PC-3 (cell line): ENCODE measurements at regions of chr1 and their contacts with region 1.

Region 1: GRCh38 chr1:8259498-8260290 is 58.2 kb upstream of the SLC45A1 start:
- DNase-seq: peak; percentile 86
- ATAC-seq: peak; percentile 42
- H3K4me3 ChIP-seq: peak overlapping the region; percentile 56
- H3K27ac ChIP-seq: peak overlapping the region; percentile 97
- H3K4me1 ChIP-seq: peaks cover 30% of the 10 kb centered on the region
- H3K27me3 ChIP-seq: no peaks in the 10 kb centered on the region
- CTCF ChIP-seq: no peak

Region 2: DNA sequence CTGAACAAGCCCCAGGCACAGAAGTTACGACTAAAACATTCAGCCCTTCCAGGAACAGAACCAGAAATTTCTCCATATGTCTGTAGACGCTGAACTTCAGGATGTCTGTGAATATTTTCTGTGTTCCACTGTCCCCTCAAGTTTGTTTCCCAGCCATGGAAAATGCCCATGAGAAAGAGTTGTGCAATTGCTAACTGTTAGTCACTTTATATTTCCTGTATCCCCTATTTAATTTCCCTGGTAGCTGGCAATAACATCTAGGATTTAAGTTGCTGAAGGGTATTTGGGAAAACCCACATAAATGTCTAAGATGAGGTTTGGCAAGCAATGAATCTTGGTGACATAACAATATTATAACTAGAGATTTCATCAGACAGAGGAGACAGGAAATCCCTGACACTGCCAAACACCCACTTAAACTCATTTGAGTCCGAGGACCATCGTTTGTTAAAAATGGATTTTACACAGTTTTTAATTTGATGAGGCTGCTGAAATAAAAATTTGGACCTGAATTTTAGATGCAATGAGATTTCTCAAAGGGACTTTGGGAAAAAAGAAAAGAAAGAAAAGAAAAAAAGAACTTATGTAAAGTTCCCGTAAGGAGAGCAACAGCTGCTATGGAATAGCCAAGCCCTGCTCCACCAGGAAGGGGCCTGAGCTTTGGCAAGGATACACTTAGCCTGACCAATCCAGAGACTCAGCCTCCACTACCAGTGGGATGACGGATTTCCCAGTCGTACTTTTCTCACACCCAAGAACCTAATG is 211.8 kb before region 1 on chr1:
- CTCF ChIA-PET with region 1: no interaction called
- POLR2A ChIA-PET with region 1: no interaction called
- intact Hi-C with region 1: loop called (anchors 5 kb)
- DNase-seq: peak; percentile 94
- ATAC-seq: peak; percentile 74
- H3K4me3 ChIP-seq: peak overlapping the region; percentile 12; the same call in 1 of the 2 replicates
- H3K27ac ChIP-seq: peak overlapping the region; percentile 96
- H3K4me1 ChIP-seq: peaks cover 42% of the 10 kb centered on the region
- H3K27me3 ChIP-seq: no peaks in the 10 kb centered on the region
- CTCF ChIP-seq: no peak

Region 3: DNA sequence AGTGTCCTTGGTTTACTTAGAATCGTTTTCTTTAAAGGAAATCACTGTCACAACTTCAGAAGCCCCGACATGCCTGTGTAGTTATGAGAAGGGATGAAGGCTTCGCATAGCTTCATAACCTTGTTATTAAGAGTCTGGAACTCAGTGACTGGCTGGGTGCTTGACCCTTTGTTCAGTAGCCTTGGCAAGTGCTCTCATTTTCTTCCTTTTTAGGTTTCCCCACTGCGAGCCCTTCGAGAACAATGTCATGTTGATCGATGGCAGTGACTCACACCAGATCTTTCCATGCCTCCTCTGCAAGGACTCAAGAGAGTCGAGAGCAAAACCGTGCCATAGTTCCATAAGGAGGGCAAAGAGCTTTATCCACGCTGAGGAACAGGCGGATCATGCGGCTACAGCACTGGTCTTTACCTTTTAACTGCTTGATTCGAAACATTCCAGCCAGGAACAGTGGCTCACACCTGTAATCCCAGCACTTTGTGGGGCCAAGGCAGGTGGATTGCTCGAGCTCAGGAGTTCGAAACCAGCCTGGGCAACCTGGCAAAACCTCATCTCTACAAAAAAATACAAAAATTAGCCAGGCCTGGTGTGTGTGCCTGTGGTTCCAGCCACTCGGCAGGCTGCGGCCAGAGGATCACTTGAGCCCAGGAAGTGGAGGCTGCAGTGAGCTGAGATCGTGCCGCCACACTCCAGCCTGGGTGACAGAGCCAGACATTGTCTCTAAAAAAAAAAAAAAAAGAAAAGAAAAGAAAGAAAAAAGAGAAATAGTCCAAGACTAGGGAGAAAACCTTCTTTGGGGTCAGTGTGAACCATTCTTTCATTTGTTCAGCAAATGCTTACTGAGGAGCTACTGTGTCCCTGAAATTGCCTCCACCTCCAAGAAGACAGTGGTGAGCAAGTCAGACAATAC is 138.2 kb before region 1 on chr1:
- CTCF ChIA-PET with region 1: no interaction called
- POLR2A ChIA-PET with region 1: no interaction called
- intact Hi-C with region 1: no loop called
- DNase-seq: peak; percentile 45
- ATAC-seq: no peak
- H3K4me3 ChIP-seq: no peak overlapping the region
- H3K27ac ChIP-seq: peak overlapping the region; percentile 54
- H3K4me1 ChIP-seq: peaks cover 14% of the 10 kb centered on the region
- H3K27me3 ChIP-seq: no peaks in the 10 kb centered on the region
- CTCF ChIP-seq: no peak

Region 4: GRCh38 chr1:8197493-8198282 is 62.0 kb before region 1 on chr1:
- CTCF ChIA-PET with region 1: no interaction called
- POLR2A ChIA-PET with region 1: interaction called, 4 read pairs
- intact Hi-C with region 1: loop called (anchors 1 kb)
- DNase-seq: peak; percentile 96
- ATAC-seq: peak; percentile 63
- H3K4me3 ChIP-seq: no peak overlapping the region
- H3K27ac ChIP-seq: peak overlapping the region; percentile 98
- H3K4me1 ChIP-seq: peaks cover 61% of the 10 kb centered on the region
- H3K27me3 ChIP-seq: no peaks in the 10 kb centered on the region
- CTCF ChIP-seq: no peak

Region 5: DNA sequence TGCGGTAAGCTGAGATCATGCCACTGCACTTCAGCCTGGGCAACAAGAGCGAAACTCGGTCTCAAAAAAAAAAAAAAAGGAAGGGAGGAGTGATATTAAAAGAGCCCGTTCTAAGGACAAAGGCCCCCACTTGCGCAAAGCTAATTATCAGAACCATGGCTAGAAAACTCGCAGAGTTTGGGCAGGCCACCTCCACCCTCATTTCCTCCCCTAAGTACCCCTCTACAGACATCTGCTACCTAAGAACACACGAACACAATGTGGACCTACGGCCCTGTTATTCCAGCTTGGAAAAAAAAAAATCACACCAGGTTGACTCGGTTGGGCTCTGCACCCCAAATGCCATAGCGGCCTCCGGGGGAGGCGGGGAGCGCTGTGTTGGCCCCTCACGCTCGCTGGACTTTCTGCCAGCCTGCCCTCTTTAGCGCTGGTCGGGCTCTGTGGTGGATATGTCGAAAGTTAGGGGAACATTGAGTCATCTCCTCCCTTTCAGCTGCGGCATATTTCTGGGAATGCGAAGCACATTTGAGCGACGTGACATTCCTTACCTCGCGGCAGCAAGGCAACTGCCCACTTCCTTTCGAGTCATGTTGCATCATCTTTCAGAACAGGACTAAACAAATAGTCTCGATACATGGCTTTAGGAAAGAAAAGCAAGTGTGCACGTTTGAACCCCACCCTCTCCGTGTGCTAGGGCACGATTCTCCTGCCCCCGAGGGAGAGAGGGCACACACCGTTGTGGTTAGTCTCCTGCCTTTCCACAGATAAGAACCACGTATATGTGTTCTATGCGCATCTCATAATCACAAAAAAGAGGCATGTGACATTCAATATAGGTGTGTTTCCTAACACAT is 47.9 kb before region 1 on chr1:
- CTCF ChIA-PET with region 1: no interaction called
- POLR2A ChIA-PET with region 1: interaction called, 3 read pairs
- intact Hi-C with region 1: loop called (anchors 2 kb)
- DNase-seq: peak; percentile 98
- ATAC-seq: peak; percentile 83
- H3K4me3 ChIP-seq: peak overlapping the region; percentile 22; the same call in 1 of the 2 replicates
- H3K27ac ChIP-seq: peak overlapping the region; percentile 98
- H3K4me1 ChIP-seq: peaks cover 33% of the 10 kb centered on the region
- H3K27me3 ChIP-seq: no peaks in the 10 kb centered on the region
- CTCF ChIP-seq: no peak

Region 6: DNA sequence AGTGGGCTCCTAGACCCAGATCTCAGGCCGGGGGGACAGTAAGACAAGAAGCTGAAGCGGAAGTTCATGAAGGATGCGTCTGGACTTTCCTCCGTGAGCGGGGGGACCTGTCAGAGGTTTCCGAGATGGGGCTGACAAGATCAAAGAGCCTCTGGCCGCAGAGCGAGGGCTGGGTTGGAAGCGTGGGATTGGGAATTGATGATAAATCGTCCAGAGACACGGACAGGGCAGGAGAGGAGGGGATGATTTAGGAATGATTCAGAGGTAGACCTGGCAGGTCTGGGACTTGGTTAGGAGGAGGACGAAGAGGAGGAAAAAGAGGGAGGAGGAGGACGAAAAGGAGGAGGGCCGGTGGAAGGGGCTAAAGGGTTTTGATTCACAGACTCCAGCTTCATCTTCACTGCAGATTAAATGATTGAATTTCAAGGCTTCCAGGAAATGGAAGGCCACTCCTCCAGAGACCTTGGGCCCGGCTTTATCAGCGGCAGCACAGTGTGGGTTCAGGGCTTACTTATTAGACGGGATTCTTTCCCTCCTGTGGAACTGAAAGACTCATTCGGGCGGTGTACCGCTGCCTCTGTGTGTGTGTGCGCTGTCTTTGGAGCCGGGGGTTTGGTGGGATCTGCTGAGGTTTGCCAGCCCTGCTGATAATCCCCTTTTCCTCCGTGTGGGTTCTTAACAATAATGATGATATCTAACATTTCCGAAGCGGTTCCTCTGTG is 27.5 kb before region 1 on chr1:
- CTCF ChIA-PET with region 1: no interaction called
- POLR2A ChIA-PET with region 1: no interaction called
- intact Hi-C with region 1: no loop called
- DNase-seq: peak; percentile 75
- ATAC-seq: peak; percentile 80
- H3K4me3 ChIP-seq: no peak overlapping the region
- H3K27ac ChIP-seq: peak overlapping the region; percentile 34
- H3K4me1 ChIP-seq: peaks cover 13% of the 10 kb centered on the region
- H3K27me3 ChIP-seq: no peaks in the 10 kb centered on the region
- CTCF ChIP-seq: no peak

Region 7: DNA sequence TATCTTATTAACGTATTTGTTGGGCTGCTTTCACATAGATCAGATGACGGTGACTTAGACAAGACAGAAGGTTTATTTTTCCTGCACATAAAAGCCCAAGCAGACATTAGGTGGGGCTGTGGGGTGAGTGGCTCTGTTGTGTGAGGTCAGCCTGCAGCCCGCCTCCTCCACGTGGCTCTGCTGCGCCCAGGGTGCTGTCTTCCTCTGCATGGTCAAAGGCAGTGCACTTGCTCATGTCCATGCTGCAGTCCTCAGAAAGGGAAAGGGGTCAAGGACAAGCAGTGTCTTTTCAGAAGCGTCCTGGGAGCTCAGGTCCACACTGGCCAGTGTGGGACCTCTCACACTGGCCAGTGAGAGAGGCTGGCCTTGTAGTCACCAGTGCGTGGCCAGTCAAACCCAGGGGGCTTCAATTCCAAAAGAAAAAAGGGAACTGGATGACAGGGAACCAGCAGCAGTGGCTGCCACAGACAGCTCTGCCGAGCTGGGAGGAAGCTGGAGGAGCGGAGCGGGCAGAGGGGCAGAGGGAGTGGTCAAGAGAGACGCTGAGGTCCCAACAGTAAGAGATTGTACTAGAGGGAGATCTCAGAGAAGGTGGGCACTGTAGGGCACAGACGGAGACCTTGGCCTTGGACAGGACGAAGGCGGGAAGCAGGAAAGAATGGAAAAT is 22.3 kb after region 1 on chr1:
- CTCF ChIA-PET with region 1: no interaction called
- POLR2A ChIA-PET with region 1: no interaction called
- intact Hi-C with region 1: loop called (anchors 2 kb)
- DNase-seq: no peak
- ATAC-seq: no peak
- H3K4me3 ChIP-seq: no peak overlapping the region
- H3K27ac ChIP-seq: no peak overlapping the region
- H3K4me1 ChIP-seq: peaks cover 27% of the 10 kb centered on the region
- H3K27me3 ChIP-seq: no peaks in the 10 kb centered on the region
- CTCF ChIP-seq: no peak